ENCODE measurements at regions of chr2 and their contacts with region 1.

Region 1: DNA sequence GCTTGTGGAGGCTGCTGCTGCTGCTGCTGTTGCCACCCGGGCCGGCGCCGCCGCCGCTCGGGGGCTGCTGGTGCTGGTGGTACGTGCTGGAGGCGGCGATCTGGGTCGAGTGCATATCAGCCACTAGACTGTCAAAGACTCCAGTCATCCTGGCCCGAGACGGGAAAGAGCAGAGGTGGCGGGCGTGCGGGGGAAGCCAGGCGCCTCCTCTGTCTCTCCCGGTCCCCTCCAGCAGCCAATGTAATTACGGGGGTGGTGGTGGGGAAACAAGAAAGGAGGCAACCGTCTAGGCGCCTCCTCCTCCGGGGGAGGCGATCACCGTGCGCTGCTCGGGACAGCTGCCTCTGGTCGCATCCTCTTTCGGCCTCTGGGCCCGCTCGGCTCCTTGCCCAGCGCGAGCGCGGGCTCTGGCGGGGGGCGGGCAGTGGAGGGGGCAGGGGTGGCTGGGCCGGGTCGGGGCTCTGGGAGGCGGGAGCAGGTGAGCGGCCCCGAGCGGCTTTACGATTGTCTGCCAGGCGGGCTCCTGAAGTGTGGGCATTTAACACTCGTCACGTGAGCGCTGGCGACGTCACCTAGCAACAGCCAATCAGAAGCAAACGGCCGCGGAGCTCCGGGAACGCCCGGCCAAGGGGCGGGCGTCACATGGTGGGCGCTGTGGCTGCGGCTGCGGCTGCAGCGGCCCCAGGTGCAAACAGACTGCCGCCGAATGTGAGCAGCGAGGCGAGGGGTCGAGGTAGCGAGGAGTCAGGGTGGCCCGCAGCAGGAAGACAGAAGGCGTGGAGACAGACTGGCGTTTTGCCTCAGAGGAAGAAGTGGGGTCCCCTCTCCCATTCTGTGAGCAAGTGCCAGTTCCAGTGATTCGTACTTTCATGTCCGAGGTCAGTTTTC is at the start of gene DLX2:
- DNase-seq: peak; percentile 85
- ATAC-seq: peak; percentile 50
- H3K4me3 Mint-ChIP-seq: peak within 1 kb of the TSS; percentile 73
- H3K27ac Mint-ChIP-seq: peak within 1 kb of the TSS; percentile 66
- H3K4me1 Mint-ChIP-seq: peaks cover 48% of the 10 kb centered on the region
- H3K27me3 Mint-ChIP-seq: peaks cover 60% of the 10 kb centered on the region
- total RNA-seq, gene DLX2: not detected

Region 2: DNA sequence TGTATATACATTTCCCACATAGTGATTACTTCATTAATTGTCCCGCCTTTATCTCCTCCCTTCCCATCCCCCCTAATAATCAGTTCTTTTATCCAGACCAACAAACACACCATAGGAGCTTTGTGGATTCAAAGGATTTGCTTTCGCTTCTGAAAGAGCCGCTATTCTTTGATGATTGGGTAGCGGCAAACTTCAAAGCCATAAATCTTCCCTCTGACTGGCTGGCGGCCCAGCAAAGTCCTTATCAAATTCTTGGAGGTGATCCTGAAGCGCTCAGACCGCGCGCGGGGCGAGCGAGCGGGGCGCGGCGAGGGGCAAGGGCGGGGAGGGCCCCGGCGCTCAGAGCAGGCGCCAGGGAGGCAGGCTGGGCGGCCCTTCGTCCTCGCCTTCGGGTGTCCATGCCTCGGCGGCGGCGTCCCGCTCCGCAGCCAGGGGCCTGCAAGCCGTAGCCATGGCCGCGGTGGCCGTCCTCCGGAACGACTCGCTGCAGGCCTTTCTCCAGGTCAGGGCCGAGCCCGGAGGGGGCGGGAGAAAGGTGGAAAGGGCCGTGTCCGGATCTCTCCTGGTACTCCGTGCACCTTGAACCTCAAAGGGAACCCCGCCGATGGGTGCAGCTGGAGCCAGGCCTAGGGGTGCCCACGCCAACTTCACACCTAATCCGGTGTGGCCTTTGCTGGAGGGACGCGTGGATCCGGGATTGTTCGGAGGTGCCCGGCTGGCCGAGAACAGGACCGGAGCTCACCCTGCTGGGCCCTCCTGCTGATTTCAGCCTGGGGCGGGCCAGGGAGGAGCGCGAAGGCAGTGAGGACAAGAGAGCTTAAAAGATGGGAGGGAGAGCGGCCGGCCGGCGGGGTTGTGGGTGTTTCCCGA is 1387.3 kb before region 1 on chr2 and contains the start of gene SP5:
- CTCF ChIA-PET with region 1: no interaction called
- POLR2A ChIA-PET with region 1: no interaction called
- intact Hi-C with region 1: loop called in 1 of 2 experiments (anchors 5 kb)
- DNase-seq: peak; percentile 48
- ATAC-seq: peak; percentile 52
- H3K4me3 Mint-ChIP-seq: peak within 1 kb of the TSS; percentile 70
- H3K27ac Mint-ChIP-seq: no peak within 1 kb of the TSS
- H3K4me1 Mint-ChIP-seq: peaks cover 26% of the 10 kb centered on the region
- H3K27me3 Mint-ChIP-seq: peaks cover 66% of the 10 kb centered on the region
- total RNA-seq, gene SP5: 0.37 TPM in 1 of 2 experiments, not detected in the other

Region 3: DNA sequence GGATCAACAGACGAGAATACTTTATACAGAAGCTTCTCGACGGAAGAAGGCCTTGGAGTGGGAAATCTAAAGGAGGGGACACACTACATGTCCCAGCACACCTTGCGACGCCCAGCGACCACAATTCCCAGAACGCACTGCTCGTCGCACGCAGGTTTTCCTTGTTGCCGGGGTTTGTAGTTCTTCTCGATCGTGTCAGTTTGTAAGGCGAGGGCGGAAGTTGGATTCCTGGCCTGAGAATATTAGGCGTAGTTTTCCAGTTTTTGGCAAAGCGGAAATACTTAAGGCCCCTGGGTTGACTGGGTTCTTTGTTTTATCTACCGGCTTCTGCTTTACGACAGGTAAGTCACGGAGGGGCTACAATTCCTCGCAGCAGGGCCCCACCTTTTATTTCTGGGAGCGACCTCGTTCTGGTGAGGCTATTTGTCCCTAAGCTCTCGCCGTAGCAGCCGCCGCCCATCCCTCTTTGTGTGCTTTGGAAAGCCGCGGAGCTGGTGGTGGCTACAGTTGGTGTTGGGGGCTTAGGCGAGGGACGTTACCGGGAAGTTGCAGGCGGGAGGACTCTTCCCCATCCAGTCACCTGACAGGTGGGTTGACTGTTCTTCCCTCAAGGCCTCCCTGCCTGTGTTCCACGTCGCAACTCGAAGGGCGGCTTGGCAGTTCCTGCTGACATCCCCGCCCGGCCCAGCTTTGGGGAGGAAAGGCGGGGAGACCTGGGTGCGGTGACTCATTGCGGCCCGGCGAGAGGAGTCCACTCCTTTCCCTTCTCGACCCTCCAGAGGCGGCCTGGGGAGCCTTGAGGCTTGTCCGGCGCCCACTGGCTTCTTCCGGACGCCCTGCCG is 415.1 kb before region 1 on chr2 and contains the start of gene DYNC1I2:
- CTCF ChIA-PET with region 1: interaction called, 4 read pairs
- POLR2A ChIA-PET with region 1: no interaction called
- intact Hi-C with region 1: loop called in 1 of 2 experiments (anchors 5 kb)
- DNase-seq: peak; percentile 86
- ATAC-seq: peak; percentile 95
- H3K4me3 Mint-ChIP-seq: peak within 1 kb of the TSS; percentile 83
- H3K27ac Mint-ChIP-seq: peak within 1 kb of the TSS; percentile 90
- H3K4me1 Mint-ChIP-seq: peaks cover 15% of the 10 kb centered on the region
- H3K27me3 Mint-ChIP-seq: no peaks in the 10 kb centered on the region
- total RNA-seq, gene DYNC1I2: 46.2 to 51.1 TPM

Region 4: DNA sequence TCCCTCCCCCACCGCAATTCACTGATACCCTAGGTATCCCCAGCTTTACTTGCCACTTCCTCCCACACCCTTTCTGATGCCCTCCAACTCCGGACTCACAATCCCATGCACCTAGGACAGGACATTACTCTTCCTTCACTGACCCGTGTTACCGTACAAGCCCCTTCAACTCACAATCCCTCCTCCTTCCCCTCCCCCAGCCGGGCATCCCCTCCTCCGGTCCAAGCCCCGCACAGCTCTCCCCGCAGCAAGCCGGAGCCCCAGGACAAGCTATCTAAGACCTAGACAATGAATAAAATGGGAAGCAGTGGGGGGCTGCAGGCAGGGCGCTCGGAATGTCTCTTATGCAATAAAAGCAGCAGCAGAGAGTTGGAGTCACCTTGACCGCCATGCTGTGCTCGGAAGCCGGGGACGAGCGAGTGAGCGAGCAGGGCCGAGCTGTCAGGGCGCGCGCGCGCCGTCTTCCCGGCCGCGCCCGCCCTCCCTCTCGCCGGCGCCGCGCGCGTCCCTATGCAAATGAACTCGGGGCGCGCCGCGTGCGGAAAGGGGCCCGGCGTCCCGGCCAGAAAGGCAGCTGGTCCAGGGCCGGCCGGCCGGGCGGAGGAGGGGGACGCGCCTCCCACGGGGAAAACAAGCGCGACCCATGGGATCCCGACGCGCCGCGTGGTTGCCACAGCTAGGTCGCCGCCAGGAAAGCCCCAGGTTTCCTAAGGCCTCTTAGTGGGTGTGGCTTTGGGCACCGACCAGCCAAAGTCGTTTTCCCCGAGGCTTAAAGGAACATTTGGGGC is 208.6 kb before region 1 on chr2 and contains the start of gene SLC25A12:
- CTCF ChIA-PET with region 1: interaction called, 3 read pairs
- POLR2A ChIA-PET with region 1: interaction called, 6 read pairs
- intact Hi-C with region 1: loop called in 1 of 2 experiments (anchors 2 kb)
- DNase-seq: peak; percentile 88
- ATAC-seq: peak; percentile 98
- H3K4me3 Mint-ChIP-seq: peak within 1 kb of the TSS; percentile 100
- H3K27ac Mint-ChIP-seq: peak within 1 kb of the TSS; percentile 98
- H3K4me1 Mint-ChIP-seq: peaks cover 30% of the 10 kb centered on the region
- H3K27me3 Mint-ChIP-seq: no peaks in the 10 kb centered on the region
- total RNA-seq, gene SLC25A12: 19.5 to 22.4 TPM

Region 5: GRCh38 chr2:172084734-172085459 is 17.7 kb before region 1 on chr2:
- CTCF ChIA-PET with region 1: interaction called, 93 read pairs
- POLR2A ChIA-PET with region 1: no interaction called
- intact Hi-C with region 1: loop called (anchors 1 to 2 kb)
- DNase-seq: peak; percentile 78
- ATAC-seq: peak; percentile 78
- H3K4me3 Mint-ChIP-seq: peak overlapping the region; percentile 73
- H3K27ac Mint-ChIP-seq: no peak overlapping the region
- H3K4me1 Mint-ChIP-seq: peaks cover 55% of the 10 kb centered on the region
- H3K27me3 Mint-ChIP-seq: peaks cover 82% of the 10 kb centered on the region

Region 6: DNA sequence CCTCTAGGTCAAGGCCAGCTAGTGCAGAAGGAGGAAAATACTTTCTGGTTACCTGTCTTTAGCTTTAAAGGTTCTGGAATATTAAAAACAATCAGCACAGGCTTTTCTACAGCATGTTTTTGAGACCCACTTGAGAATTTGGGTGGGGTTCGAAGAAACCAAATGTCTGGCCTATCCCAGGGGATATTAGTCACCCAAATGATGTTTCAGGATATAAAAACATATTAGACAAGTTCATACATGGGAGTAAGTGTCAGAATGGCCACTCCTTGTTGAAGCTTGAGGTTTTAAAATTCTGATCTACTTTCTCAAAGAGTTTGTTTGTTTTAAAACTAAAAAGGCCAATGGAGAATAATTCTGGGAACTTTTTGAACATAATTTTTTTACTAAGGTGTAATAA is 158.7 kb after region 1 on chr2:
- CTCF ChIA-PET with region 1: no interaction called
- POLR2A ChIA-PET with region 1: no interaction called
- intact Hi-C with region 1: no loop called
- DNase-seq: no peak
- ATAC-seq: no peak
- H3K4me3 Mint-ChIP-seq: no peak overlapping the region
- H3K27ac Mint-ChIP-seq: no peak overlapping the region
- H3K4me1 Mint-ChIP-seq: no peaks in the 10 kb centered on the region
- H3K27me3 Mint-ChIP-seq: no peaks in the 10 kb centered on the region

Region 7: DNA sequence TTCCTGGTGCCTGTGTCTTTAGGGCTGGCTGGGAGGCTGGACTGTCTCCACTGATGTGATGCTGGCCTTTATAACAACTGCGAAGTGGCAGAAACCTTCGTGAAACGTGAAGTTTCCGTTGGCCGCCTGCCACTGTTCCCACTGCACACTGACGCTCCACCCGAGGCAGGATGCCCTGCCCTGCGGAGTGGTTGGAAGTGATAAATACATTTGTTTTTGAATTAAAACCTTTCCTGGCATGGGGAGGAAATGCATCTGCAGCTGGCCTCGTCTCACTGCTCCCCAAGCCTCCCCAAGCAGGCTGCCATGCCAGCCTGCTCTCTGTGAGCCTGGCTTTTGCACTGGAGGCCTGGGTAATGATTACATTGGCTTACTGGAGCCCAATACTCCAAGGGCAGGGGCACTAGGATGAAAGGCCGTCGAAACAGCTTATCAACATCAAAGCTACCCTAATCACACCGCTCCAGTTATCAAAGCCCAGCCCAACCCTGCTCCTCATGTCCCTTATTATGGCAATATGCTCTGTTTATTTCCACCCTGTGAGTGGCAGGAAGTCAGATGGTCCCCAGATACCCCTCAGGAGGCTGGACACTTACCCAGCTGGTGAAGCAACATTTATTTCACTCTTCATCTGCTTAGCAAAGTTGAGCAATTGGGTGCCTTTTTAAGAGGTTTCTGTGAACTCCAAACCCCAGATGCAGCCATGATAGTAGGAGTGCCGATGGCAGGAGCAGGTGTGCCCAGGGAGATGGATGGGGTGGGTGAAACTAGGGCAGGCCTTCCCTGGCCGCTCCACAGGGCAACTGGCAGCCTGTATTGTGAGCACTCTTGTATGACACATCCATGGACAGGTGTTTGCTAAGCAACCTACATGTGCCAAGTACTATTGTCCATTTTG is 227.4 kb after region 1 on chr2:
- CTCF ChIA-PET with region 1: no interaction called
- POLR2A ChIA-PET with region 1: no interaction called
- intact Hi-C with region 1: no loop called
- DNase-seq: no peak
- ATAC-seq: no peak
- H3K4me3 Mint-ChIP-seq: no peak overlapping the region
- H3K27ac Mint-ChIP-seq: no peak overlapping the region
- H3K4me1 Mint-ChIP-seq: peaks cover 9% of the 10 kb centered on the region
- H3K27me3 Mint-ChIP-seq: no peaks in the 10 kb centered on the region

Region 8: GRCh38 chr2:172427256-172427989 is 324.8 kb after region 1 on chr2 and contains the start of gene ITGA6:
- CTCF ChIA-PET with region 1: no interaction called
- POLR2A ChIA-PET with region 1: no interaction called
- intact Hi-C with region 1: loop called in 1 of 2 experiments (anchors 5 kb)
- DNase-seq: peak; percentile 85
- ATAC-seq: peak; percentile 59
- H3K4me3 Mint-ChIP-seq: peak within 1 kb of the TSS; percentile 80
- H3K27ac Mint-ChIP-seq: peak within 1 kb of the TSS; percentile 73
- H3K4me1 Mint-ChIP-seq: peaks cover 79% of the 10 kb centered on the region
- H3K27me3 Mint-ChIP-seq: peaks cover 2% of the 10 kb centered on the region
- total RNA-seq, gene ITGA6: 7.8 to 7.9 TPM

Measured in activated CD4-positive, alpha-beta T cell treated with anti-CD3 and anti-CD28 coated beads for 36 hours (primary cell).